CD8-positive, alpha-beta T cell (primary cell): ENCODE measurements at regions of chrX and their contacts with region 1.

Region 1: GRCh38 chrX:101091817-101092216 is 6.2 kb upstream of the CENPI start:
- DNase-seq: no peak
- ATAC-seq: no peak
- H3K4me3 ChIP-seq: no peak overlapping the region
- H3K4me3 Mint-ChIP-seq: no peak overlapping the region
- H3K27ac ChIP-seq: no peak overlapping the region
- H3K27ac Mint-ChIP-seq: no peak overlapping the region
- H3K4me1 ChIP-seq: peaks cover under 1% of the 10 kb centered on the region
- H3K4me1 Mint-ChIP-seq: no peaks in the 10 kb centered on the region
- H3K27me3 ChIP-seq: no peaks in the 10 kb centered on the region
- H3K27me3 Mint-ChIP-seq: no peaks in the 10 kb centered on the region
- CTCF ChIP-seq: no peak

Region 2: DNA sequence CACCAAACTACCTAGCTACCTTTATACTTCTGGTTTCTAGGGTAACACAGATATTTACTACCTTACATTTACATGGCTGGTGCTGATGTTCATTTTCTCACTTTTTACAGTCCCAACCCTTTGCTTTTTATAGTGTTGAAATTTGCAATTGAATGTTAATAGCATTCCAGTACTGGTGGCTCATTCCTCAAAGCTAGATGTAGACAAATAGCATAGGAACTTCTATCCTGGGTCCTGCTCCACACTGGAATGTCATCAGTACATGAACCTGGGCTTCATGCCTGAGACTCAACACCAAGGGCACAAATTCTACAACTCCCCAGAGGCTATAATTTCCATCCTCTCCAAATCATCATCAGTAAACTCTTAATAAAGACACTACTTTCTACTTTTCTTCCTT is 29.6 kb before region 1 on chrX:
- CTCF ChIA-PET with region 1: no interaction called
- POLR2A ChIA-PET with region 1: no interaction called
- intact Hi-C with region 1: loop called in 1 of 2 experiments (anchors 1 kb)
- DNase-seq: no peak
- ATAC-seq: no peak
- H3K4me3 ChIP-seq: no peak overlapping the region
- H3K4me3 Mint-ChIP-seq: no peak overlapping the region
- H3K27ac ChIP-seq: no peak overlapping the region
- H3K27ac Mint-ChIP-seq: no peak overlapping the region
- H3K4me1 ChIP-seq: no peaks in the 10 kb centered on the region
- H3K4me1 Mint-ChIP-seq: no peaks in the 10 kb centered on the region
- H3K27me3 ChIP-seq: no peaks in the 10 kb centered on the region
- H3K27me3 Mint-ChIP-seq: peaks cover 3% of the 10 kb centered on the region
- CTCF ChIP-seq: no peak